CD8-positive, alpha-beta T cell (primary cell): ENCODE measurements at regions of chr2 and their contacts with region 1.

Region 1: DNA sequence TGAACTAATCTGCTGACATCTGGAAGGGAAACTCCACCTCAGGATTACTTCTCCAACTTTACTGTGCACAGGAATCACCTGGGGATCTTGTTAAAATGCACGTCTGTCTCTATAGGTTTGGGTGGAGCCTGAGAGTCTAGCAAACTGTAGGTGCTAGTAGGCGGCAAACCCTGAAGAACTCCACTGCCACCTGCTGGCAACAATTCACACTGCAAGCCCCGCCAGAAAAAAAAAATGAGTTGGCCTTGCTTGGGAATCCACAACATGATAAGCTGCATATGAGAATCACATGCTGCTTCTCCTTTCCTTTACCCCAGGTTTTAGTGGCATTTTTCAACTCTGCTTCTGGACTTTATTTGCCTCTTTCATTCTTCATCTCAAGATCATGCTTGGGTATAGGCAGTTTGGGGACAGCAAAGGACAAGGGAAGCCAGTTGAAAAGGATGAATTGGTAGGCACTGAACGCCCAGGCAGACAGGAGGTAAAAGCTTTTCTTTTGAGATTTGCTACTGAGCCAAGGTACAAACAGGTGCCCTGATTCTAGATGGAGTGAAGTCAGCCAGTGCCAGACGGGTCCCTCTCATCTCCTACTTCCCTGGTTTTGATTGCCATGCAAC is 88.8 kb downstream of the VIT start:
- DNase-seq: peak; percentile 36 to 78 (median 60)
- ATAC-seq: peak; percentile 84
- H3K4me3 ChIP-seq: no peak overlapping the region
- H3K4me3 Mint-ChIP-seq: no peak overlapping the region
- H3K27ac ChIP-seq: no peak overlapping the region
- H3K27ac Mint-ChIP-seq: no peak overlapping the region
- H3K4me1 ChIP-seq: no peaks in the 10 kb centered on the region
- H3K4me1 Mint-ChIP-seq: peaks cover 4% of the 10 kb centered on the region
- H3K27me3 ChIP-seq: no peaks in the 10 kb centered on the region
- H3K27me3 Mint-ChIP-seq: peaks cover 7% of the 10 kb centered on the region
- CTCF ChIP-seq: peak; percentile 91

Region 2: GRCh38 chr2:35891936-35892335 is 893.4 kb before region 1 on chr2:
- CTCF ChIA-PET with region 1: no interaction called
- POLR2A ChIA-PET with region 1: no interaction called
- intact Hi-C with region 1: loop called in 1 of 2 experiments (anchors 10 kb)
- DNase-seq: no peak
- ATAC-seq: no peak
- H3K4me3 ChIP-seq: peak overlapping the region in 1 of 2 experiments; percentile 33
- H3K4me3 Mint-ChIP-seq: peak overlapping the region; percentile 58
- H3K27ac ChIP-seq: no peak overlapping the region
- H3K27ac Mint-ChIP-seq: no peak overlapping the region
- H3K4me1 ChIP-seq: no peaks in the 10 kb centered on the region
- H3K4me1 Mint-ChIP-seq: peaks cover 8% of the 10 kb centered on the region
- H3K27me3 ChIP-seq: no peaks in the 10 kb centered on the region
- H3K27me3 Mint-ChIP-seq: no peaks in the 10 kb centered on the region
- CTCF ChIP-seq: no peak

Region 3: DNA sequence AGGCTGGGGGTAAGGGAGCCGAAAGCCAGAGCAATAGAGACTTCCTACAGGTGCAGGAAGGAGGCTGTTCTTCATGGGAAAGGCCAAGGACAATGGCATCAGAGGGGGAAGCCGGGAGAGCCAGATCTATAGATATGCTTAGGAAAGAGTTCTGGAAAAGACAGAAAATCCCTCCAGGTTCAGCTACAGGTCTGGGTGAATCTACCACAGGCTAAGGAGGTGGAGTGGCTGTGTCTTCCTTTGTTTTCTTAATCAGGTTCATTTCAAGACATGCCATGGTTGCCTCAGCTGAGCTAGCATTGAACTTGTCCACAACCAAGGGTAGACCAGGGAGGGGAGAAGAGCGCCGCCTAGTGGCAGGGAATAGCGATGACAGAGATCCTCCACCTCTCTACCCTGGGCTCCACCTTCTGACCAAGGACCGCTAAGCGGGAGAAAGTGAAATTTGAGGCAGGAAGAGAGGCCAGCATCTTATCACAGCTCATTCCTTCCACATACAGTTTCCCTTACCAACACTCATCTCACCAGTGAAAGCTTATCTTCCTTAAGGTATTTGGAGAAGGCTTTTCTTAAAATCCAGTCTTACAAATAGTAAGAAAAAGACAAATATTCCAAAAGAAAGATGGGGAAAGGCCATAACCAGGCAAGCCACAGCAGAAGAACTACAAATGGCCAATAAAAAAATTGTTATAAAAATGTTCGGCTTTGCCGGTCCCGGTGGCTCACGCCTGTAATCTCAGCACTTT is 14.6 kb before region 1 on chr2:
- CTCF ChIA-PET with region 1: interaction called, 36 read pairs
- POLR2A ChIA-PET with region 1: no interaction called
- intact Hi-C with region 1: no loop called
- DNase-seq: peak in 6 of 9 experiments; percentile 2 to 54 (median 20)
- ATAC-seq: no peak
- H3K4me3 ChIP-seq: no peak overlapping the region
- H3K4me3 Mint-ChIP-seq: no peak overlapping the region
- H3K27ac ChIP-seq: no peak overlapping the region
- H3K27ac Mint-ChIP-seq: no peak overlapping the region
- H3K4me1 ChIP-seq: no peaks in the 10 kb centered on the region
- H3K4me1 Mint-ChIP-seq: no peaks in the 10 kb centered on the region
- H3K27me3 ChIP-seq: no peaks in the 10 kb centered on the region
- H3K27me3 Mint-ChIP-seq: peaks cover 2% of the 10 kb centered on the region
- CTCF ChIP-seq: peak; percentile 16

Region 4: GRCh38 chr2:37026050-37026449 is 240.8 kb after region 1 on chr2:
- CTCF ChIA-PET with region 1: no interaction called
- POLR2A ChIA-PET with region 1: no interaction called
- intact Hi-C with region 1: loop called in 1 of 2 experiments (anchors 10 kb)
- DNase-seq: peak in 2 of 9 experiments; percentile 5 to 6
- ATAC-seq: no peak
- H3K4me3 ChIP-seq: no peak overlapping the region
- H3K4me3 Mint-ChIP-seq: no peak overlapping the region
- H3K27ac ChIP-seq: no peak overlapping the region
- H3K27ac Mint-ChIP-seq: peak overlapping the region; percentile 5
- H3K4me1 ChIP-seq: no peaks in the 10 kb centered on the region
- H3K4me1 Mint-ChIP-seq: no peaks in the 10 kb centered on the region
- H3K27me3 ChIP-seq: no peaks in the 10 kb centered on the region
- H3K27me3 Mint-ChIP-seq: no peaks in the 10 kb centered on the region
- CTCF ChIP-seq: no peak

Region 5: GRCh38 chr2:38274286-38275276 is 1489.3 kb after region 1 on chr2:
- CTCF ChIA-PET with region 1: interaction called, 3 read pairs
- POLR2A ChIA-PET with region 1: no interaction called
- intact Hi-C with region 1: loop called in 1 of 2 experiments (anchors 10 kb)
- DNase-seq: peak in 3 of 9 experiments; percentile 21 to 64 (median 63)
- ATAC-seq: peak; percentile 36
- H3K4me3 ChIP-seq: no peak overlapping the region
- H3K4me3 Mint-ChIP-seq: no peak overlapping the region
- H3K27ac ChIP-seq: no peak overlapping the region
- H3K27ac Mint-ChIP-seq: no peak overlapping the region
- H3K4me1 ChIP-seq: no peaks in the 10 kb centered on the region
- H3K4me1 Mint-ChIP-seq: no peaks in the 10 kb centered on the region
- H3K27me3 ChIP-seq: no peaks in the 10 kb centered on the region
- H3K27me3 Mint-ChIP-seq: peaks cover 2% of the 10 kb centered on the region
- CTCF ChIP-seq: peak; percentile 46

Region 6: DNA sequence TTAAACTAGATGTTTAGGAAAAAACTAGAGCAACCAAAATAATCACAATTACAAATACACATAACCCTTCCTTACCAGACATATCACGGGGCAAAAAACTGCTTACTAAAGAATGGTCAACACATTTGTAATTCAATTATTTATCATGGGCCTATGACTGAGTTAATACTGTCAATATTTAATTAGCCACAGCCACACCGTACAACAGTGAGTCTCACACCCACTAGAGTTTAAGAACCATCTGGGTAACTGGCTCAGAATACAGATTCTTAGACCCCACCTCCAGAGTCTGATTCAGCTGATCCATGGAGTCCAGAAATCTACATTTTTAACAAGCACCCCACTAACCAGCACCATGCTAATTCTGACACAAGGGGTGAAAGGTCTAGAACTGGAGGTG is 1576.9 kb after region 1 on chr2:
- CTCF ChIA-PET with region 1: no interaction called
- POLR2A ChIA-PET with region 1: no interaction called
- intact Hi-C with region 1: no loop called
- DNase-seq: no peak
- ATAC-seq: no peak
- H3K4me3 ChIP-seq: no peak overlapping the region
- H3K4me3 Mint-ChIP-seq: no peak overlapping the region
- H3K27ac ChIP-seq: no peak overlapping the region
- H3K27ac Mint-ChIP-seq: no peak overlapping the region
- H3K4me1 ChIP-seq: no peaks in the 10 kb centered on the region
- H3K4me1 Mint-ChIP-seq: peaks cover 46% of the 10 kb centered on the region
- H3K27me3 ChIP-seq: no peaks in the 10 kb centered on the region
- H3K27me3 Mint-ChIP-seq: no peaks in the 10 kb centered on the region
- CTCF ChIP-seq: no peak